A549 (cell line): ENCODE measurements at regions of chr15 and their contacts with region 1.

Region 1: DNA sequence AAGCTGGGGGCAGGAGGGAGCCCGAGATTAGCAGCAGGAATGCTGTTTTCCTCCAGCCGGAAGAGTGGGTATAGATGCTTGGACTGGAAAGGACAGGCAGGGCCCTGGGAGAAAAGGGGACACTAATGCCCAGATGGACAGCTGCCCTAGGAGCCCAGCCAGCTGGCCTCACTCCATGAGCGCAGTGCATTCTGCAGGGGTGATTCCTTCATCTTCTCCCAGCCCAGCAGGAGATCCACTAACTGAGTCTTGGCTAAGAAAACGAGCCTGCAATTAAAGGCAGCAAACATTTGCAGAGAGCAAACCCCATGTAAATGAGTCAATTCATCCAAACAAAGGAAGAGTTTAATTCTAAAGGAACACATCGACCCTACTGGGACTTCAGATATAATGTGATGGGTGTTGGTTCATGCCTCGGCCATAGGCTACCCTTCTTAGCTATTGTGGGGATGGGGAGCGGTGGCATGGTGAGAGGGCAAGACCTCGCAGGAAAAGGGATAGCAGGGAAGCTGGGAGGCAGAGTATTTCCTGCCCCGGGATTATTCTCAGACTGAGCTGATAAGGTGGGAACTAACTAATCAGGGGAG is 13.3 kb upstream of the MINAR1 start:
- DNase-seq: no peak
- ATAC-seq: no peak
- H3K4me3 ChIP-seq: no peak overlapping the region
- H3K27ac ChIP-seq: no peak overlapping the region
- H3K4me1 ChIP-seq: no peaks in the 10 kb centered on the region
- CTCF ChIP-seq: no peak
- EP300 ChIP-seq: no peak
- POLR2A ChIP-seq: no peak
- RAD21 ChIP-seq: no peak

Region 2: DNA sequence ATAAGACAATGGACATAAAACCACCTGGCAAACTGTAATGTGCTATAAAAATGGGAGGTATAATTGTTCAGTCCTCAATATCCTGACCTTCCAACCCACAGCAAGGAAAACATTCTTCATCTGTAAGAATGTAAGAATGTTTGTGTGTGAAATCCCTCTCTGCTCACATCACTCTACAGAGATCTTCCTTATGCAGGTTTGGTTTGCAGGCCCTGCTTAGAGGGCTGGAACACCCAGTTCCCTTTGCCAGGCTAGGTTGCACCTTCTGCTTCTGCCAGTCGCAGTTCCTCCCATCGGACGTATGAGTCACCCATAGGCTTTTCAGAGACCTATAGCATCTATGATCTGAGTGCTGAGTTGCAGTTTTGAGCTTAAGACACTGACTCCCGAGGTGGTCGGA is 10.7 kb before region 1 on chr15:
- CTCF ChIA-PET with region 1: no interaction called
- POLR2A ChIA-PET with region 1: no interaction called
- DNase-seq: no peak
- ATAC-seq: no peak
- H3K4me3 ChIP-seq: no peak overlapping the region
- H3K27ac ChIP-seq: no peak overlapping the region
- H3K4me1 ChIP-seq: no peaks in the 10 kb centered on the region
- CTCF ChIP-seq: no peak
- EP300 ChIP-seq: no peak
- POLR2A ChIP-seq: no peak
- RAD21 ChIP-seq: no peak

Region 3: GRCh38 chr15:79431636-79432344 is 13.0 kb after region 1 on chr15 and contains the start of gene MINAR1:
- CTCF ChIA-PET with region 1: interaction called, 17 read pairs
- POLR2A ChIA-PET with region 1: no interaction called
- DNase-seq: peak; percentile 39 to 50
- ATAC-seq: peak; percentile 79 to 91
- H3K4me3 ChIP-seq: peak within 1 kb of the TSS; percentile 58
- H3K27ac ChIP-seq: peak within 1 kb of the TSS; percentile 28 to 67; a peak in 4 of 6 replicates
- H3K4me1 ChIP-seq: no peaks in the 10 kb centered on the region
- CTCF ChIP-seq: peak; percentile 52
- EP300 ChIP-seq: no peak
- POLR2A ChIP-seq: no peak
- RAD21 ChIP-seq: peak; percentile 23 to 51; a peak in 2 of 5 replicates
- polyA plus RNA-seq, gene MINAR1: 0.88 and 1.5 TPM in 2 replicates

Region 4: GRCh38 chr15:79582650-79583049 is 163.9 kb after region 1 on chr15:
- CTCF ChIA-PET with region 1: no interaction called
- POLR2A ChIA-PET with region 1: no interaction called
- DNase-seq: no peak
- ATAC-seq: no peak
- H3K4me3 ChIP-seq: no peak overlapping the region
- H3K27ac ChIP-seq: no peak overlapping the region
- H3K4me1 ChIP-seq: no peaks in the 10 kb centered on the region
- CTCF ChIP-seq: no peak
- EP300 ChIP-seq: no peak
- POLR2A ChIP-seq: no peak
- RAD21 ChIP-seq: no peak